ENCODE measurements at regions of chr7 and their contacts with region 1.

Region 1: GRCh38 chr7:149005241-149006050 is 22.9 kb downstream of the PDIA4 start:
- DNase-seq: peak; percentile 38 to 90 (median 74)
- ATAC-seq: peak; percentile 82 to 96 (median 90)
- H3K4me3 ChIP-seq: no peak overlapping the region
- H3K4me3 Mint-ChIP-seq: no peak overlapping the region
- H3K27ac ChIP-seq: peak overlapping the region; percentile 12
- H3K27ac Mint-ChIP-seq: peak overlapping the region; percentile 34 to 65
- H3K4me1 ChIP-seq: peaks cover 0 to 9% of the 10 kb centered on the region in 2 experiments
- H3K4me1 Mint-ChIP-seq: peaks cover 5 to 7% (median 6%) of the 10 kb centered on the region in 3 donors
- H3K27me3 ChIP-seq: no peaks in the 10 kb centered on the region
- H3K27me3 Mint-ChIP-seq: no peaks in the 10 kb centered on the region

Region 2: DNA sequence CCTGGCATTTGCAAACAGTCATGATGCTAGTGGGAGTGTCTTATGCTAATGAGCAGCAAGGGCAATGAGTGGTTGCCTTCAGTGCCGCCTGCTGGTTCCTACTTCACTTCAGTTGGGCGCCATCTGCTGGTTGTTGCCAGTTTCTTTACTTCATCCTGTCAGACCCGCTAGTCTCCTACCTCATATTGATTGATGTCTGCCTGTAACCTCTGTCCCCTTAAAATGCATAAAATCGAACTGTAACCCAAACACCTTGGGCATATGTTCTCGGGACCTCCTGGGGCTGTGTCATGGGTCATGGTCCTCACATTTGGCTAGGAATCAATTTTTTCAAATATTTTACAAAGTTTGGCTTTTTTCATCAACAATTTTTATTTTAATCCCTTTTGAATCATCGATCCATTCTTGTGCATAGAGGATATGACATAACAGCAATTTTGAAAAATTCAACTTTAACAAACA is 477.7 kb before region 1 on chr7:
- CTCF ChIA-PET with region 1: no interaction called
- POLR2A ChIA-PET with region 1: no interaction called
- DNase-seq: peak; percentile 50 to 93 (median 80)
- ATAC-seq: peak; percentile 94 to 98 (median 98)
- H3K4me3 ChIP-seq: no peak overlapping the region
- H3K4me3 Mint-ChIP-seq: no peak overlapping the region
- H3K27ac ChIP-seq: no peak overlapping the region
- H3K27ac Mint-ChIP-seq: no peak overlapping the region
- H3K4me1 ChIP-seq: peaks cover 0 to 7% of the 10 kb centered on the region in 2 experiments
- H3K4me1 Mint-ChIP-seq: peaks cover 3 to 8% (median 4%) of the 10 kb centered on the region in 3 donors
- H3K27me3 ChIP-seq: peaks cover 0 to 4% of the 10 kb centered on the region in 2 experiments
- H3K27me3 Mint-ChIP-seq: peaks cover 24 to 29% of the 10 kb centered on the region in 2 donors

Region 3: DNA sequence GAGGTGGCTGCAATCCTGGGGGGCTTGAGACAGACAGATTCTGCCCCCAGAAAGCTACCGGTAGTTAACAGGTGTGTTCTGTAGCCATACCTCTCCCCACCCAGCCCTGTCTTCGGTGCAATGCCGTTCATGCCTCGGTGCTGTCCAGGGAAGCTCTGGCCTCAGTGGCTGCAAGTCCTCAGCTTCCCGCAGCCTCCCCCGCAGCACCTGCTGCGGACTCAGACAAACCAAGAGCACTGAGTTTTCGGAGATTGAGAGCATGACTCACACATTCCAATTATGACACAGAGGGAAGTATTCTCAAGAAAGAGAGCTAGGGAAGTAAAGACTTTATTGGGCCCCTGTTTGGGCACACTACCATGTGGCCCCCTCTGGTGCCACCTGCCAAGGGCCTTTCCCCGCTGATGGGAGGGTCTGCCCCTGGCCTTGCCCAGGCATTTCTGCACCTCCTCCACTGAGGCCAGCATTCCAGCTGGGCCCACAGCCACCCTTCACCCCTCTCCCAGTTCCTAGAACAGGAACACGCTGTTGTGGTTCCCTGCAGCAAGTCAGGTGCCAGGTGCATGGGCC is 91.2 kb before region 1 on chr7:
- CTCF ChIA-PET with region 1: no interaction called
- POLR2A ChIA-PET with region 1: no interaction called
- DNase-seq: peak in 2 of 35 experiments; percentile 9 to 14
- ATAC-seq: peak in 3 of 4 experiments; percentile 27 to 35 (median 28)
- H3K4me3 ChIP-seq: no peak overlapping the region
- H3K4me3 Mint-ChIP-seq: peak overlapping the region; percentile 34 to 77 (median 44)
- H3K27ac ChIP-seq: peak overlapping the region; percentile 66
- H3K27ac Mint-ChIP-seq: peak overlapping the region; percentile 77 to 86
- H3K4me1 ChIP-seq: peaks cover 38 to 39% of the 10 kb centered on the region in 2 experiments
- H3K4me1 Mint-ChIP-seq: peaks cover 50 to 61% (median 53%) of the 10 kb centered on the region in 3 donors
- H3K27me3 ChIP-seq: peaks cover 0 to 3% of the 10 kb centered on the region in 2 experiments
- H3K27me3 Mint-ChIP-seq: no peaks in the 10 kb centered on the region

Region 4: DNA sequence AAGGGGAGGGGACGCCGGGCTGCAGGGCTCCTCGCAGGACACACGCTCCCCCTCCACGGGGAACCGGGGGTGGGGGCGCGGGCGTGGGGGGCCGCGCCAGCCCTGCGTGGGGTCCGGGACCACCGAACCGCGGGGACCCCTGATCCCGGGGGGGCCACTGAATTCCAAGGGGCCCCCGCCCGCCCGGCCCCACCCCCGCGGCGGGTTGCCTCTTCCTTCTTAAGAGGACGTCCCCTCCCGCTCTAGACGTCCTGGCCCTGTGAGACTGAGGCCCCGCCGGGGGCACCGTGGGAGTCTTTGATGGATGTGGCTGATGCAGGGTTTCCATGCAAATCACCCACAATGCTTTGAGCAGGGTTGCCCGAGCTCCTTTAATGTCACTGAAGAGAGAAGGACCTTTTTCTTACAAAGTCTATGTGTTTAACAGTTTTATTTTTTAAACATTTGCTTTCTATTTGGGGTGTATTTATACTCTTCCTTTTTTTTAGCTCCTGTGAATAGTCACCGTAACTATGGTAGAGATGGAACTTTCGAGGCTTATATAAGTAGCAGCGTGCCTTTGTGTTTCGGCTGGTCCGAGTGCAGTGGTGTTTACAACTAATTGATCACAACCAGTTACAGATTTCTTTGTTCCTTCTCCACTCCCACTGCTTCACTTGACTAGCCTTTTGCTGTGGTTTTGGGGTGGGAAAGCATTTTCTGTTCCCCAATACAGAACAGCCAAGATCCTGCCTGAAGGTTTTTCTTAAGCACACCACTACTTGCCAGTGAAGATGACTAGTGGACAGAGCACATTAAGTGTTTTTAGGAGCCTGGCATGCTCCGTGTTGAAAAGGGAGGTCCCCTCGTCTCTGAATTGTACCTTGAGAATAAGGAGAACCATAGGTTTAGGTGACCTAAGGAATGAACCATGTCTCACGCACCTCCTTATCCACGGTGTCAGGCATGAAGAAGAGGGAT is 22.0 kb before region 1 on chr7:
- CTCF ChIA-PET with region 1: interaction called, 4 to 10 read pairs
- POLR2A ChIA-PET with region 1: no interaction called
- DNase-seq: peak; percentile 51 to 91 (median 82)
- ATAC-seq: peak; percentile 63 to 72 (median 70)
- H3K4me3 ChIP-seq: peak overlapping the region; percentile 52 to 74
- H3K4me3 Mint-ChIP-seq: peak overlapping the region; percentile 83 to 94 (median 84)
- H3K27ac ChIP-seq: peak overlapping the region; percentile 55
- H3K27ac Mint-ChIP-seq: peak overlapping the region; percentile 89 to 96
- H3K4me1 ChIP-seq: peaks cover 34 to 41% of the 10 kb centered on the region in 2 experiments
- H3K4me1 Mint-ChIP-seq: peaks cover 58 to 75% (median 63%) of the 10 kb centered on the region in 3 donors
- H3K27me3 ChIP-seq: no peaks in the 10 kb centered on the region
- H3K27me3 Mint-ChIP-seq: no peaks in the 10 kb centered on the region

Region 5: GRCh38 chr7:149028346-149029109 is 23.1 kb after region 1 on chr7 and contains the start of gene PDIA4:
- CTCF ChIA-PET with region 1: interaction called, 4 to 14 read pairs
- POLR2A ChIA-PET with region 1: interaction called in 1 of 2 experiments, 3 read pairs
- DNase-seq: peak; percentile 97 to 99 (median 98)
- ATAC-seq: peak; percentile 88 to 90 (median 89)
- H3K4me3 ChIP-seq: peak within 1 kb of the TSS; percentile 83 to 85
- H3K4me3 Mint-ChIP-seq: peak within 1 kb of the TSS; percentile 88 to 96 (median 91)
- H3K27ac ChIP-seq: peak within 1 kb of the TSS; percentile 76
- H3K27ac Mint-ChIP-seq: peak within 1 kb of the TSS; percentile 93 to 94
- H3K4me1 ChIP-seq: peaks cover 26 to 37% of the 10 kb centered on the region in 2 experiments
- H3K4me1 Mint-ChIP-seq: peaks cover 25 to 47% (median 41%) of the 10 kb centered on the region in 3 donors
- H3K27me3 ChIP-seq: no peaks in the 10 kb centered on the region
- H3K27me3 Mint-ChIP-seq: no peaks in the 10 kb centered on the region
- total RNA-seq, gene PDIA4: 40.3 to 75.3 (median 68.4) TPM

Region 6: GRCh38 chr7:149050941-149051340 is 45.5 kb after region 1 on chr7:
- CTCF ChIA-PET with region 1: interaction called in 1 of 2 experiments, 10 read pairs
- POLR2A ChIA-PET with region 1: no interaction called
- DNase-seq: no peak
- ATAC-seq: no peak
- H3K4me3 ChIP-seq: no peak overlapping the region
- H3K4me3 Mint-ChIP-seq: no peak overlapping the region
- H3K27ac ChIP-seq: no peak overlapping the region
- H3K27ac Mint-ChIP-seq: no peak overlapping the region
- H3K4me1 ChIP-seq: no peaks in the 10 kb centered on the region
- H3K4me1 Mint-ChIP-seq: no peaks in the 10 kb centered on the region
- H3K27me3 ChIP-seq: peaks cover 0 to 4% of the 10 kb centered on the region in 2 experiments
- H3K27me3 Mint-ChIP-seq: peaks cover 0 to 4% of the 10 kb centered on the region in 2 donors

Region 7: GRCh38 chr7:149071641-149072437 is 66.4 kb after region 1 on chr7:
- CTCF ChIA-PET with region 1: interaction called, 9 to 23 read pairs
- POLR2A ChIA-PET with region 1: no interaction called
- DNase-seq: peak in 34 of 35 experiments; percentile 8 to 69 (median 42)
- ATAC-seq: peak; percentile 70 to 87 (median 78)
- H3K4me3 ChIP-seq: peak overlapping the region in 1 of 2 donors; percentile 21
- H3K4me3 Mint-ChIP-seq: peak overlapping the region in 2 of 3 donors; percentile 9 to 34
- H3K27ac ChIP-seq: peak overlapping the region; percentile 60
- H3K27ac Mint-ChIP-seq: peak overlapping the region; percentile 66 to 78
- H3K4me1 ChIP-seq: peaks cover 0 to 10% of the 10 kb centered on the region in 2 experiments
- H3K4me1 Mint-ChIP-seq: peaks cover 4 to 16% (median 8%) of the 10 kb centered on the region in 3 donors
- H3K27me3 ChIP-seq: no peaks in the 10 kb centered on the region
- H3K27me3 Mint-ChIP-seq: no peaks in the 10 kb centered on the region